Esophagus squamous epithelium (tissue), 5 donors: ENCODE measurements at regions of chrX and their contacts with region 1.

Region 1: GRCh38 chrX:24395775-24396174 is 35.3 kb downstream of the SUPT20HL1 start:
- DNase-seq: no peak
- H3K4me3 ChIP-seq: no peak overlapping the region
- H3K27ac ChIP-seq: peak overlapping the region in 2 of 4 donors; percentile 57 to 63
- H3K4me1 ChIP-seq: peaks cover 0 to 26% (median 3%) of the 10 kb centered on the region in 3 donors
- H3K27me3 ChIP-seq: no peaks in the 10 kb centered on the region
- CTCF ChIP-seq: peak; percentile 56 to 80 (median 73)
- POLR2A ChIP-seq: no peak

Region 2: GRCh38 chrX:24498975-24499374 is 103.2 kb after region 1 on chrX:
- intact Hi-C with region 1: loop called (anchors 5 kb)
- DNase-seq: no peak
- H3K4me3 ChIP-seq: no peak overlapping the region
- H3K27ac ChIP-seq: peak overlapping the region in 2 of 4 donors; percentile 38 to 57
- H3K4me1 ChIP-seq: peaks cover 0 to 22% (median 4%) of the 10 kb centered on the region in 3 donors
- H3K27me3 ChIP-seq: no peaks in the 10 kb centered on the region
- CTCF ChIP-seq: peak in 5 of 6 experiments; percentile 65 to 84 (median 78)
- POLR2A ChIP-seq: no peak

Region 3: GRCh38 chrX:25275159-25275558 is 879.4 kb after region 1 on chrX:
- intact Hi-C with region 1: no loop called
- DNase-seq: no peak
- H3K4me3 ChIP-seq: no peak overlapping the region
- H3K27ac ChIP-seq: no peak overlapping the region
- H3K4me1 ChIP-seq: no peaks in the 10 kb centered on the region
- H3K27me3 ChIP-seq: no peaks in the 10 kb centered on the region
- CTCF ChIP-seq: no peak
- POLR2A ChIP-seq: no peak